ENCODE measurements at regions of chr10 and their contacts with region 1.

Region 1: DNA sequence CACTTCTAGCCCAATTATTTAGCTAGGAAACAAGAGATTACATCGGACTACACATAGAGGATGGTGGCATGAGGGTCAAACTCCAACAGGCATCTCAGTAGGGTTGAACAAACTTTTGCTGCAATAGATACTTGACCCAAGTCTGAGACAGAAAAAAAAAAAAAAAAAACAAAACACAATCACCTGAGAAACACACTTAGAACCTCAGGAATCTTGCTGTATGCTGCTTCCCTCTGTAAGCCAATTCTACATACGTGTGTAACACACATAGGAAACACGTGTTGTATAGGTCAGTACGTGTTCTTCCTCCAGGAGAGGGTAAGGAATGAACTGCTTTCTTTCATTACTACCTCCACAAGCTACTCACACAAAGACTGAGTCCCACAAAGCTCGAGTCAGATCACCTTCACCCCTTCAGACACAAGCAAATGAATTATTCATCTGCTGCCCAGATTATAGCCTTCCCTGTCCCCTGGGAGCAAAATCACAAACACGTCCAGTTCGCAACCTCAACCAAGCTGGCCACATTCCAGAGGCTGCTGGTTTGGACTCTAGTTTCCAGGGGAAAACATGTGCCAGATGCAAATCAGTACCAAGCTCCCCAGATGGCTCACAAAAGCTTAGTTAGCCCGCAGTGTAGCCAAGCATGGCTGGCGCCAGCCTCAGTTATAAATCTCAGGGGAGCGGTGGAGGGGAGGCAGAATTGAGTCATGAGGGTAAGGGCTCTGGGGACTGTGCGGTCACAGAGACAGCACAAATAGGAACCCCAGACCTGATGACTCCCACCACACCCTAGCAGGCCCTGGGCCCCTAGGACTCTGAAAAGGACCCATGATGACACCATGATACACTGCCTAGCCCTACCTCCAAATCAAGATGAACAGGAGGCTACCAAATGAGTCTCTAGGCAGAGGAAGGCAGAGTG is 15.1 kb downstream of the PSAP start:
- DNase-seq: peak; percentile 98
- H3K4me3 ChIP-seq: peak overlapping the region; percentile 57
- H3K27ac ChIP-seq: peak overlapping the region; percentile 87
- H3K4me1 ChIP-seq: peaks cover 80% of the 10 kb centered on the region
- CTCF ChIP-seq: peak; percentile 10; the same call in 1 of the 2 replicates

Region 2: GRCh38 chr10:71805776-71806703 is 29.9 kb before region 1 on chr10:
- CTCF ChIA-PET with region 1: no interaction called
- POLR2A ChIA-PET with region 1: no interaction called
- intact Hi-C with region 1: no loop called
- DNase-seq: no peak
- H3K4me3 ChIP-seq: no peak overlapping the region
- H3K27ac ChIP-seq: no peak overlapping the region
- H3K4me1 ChIP-seq: peaks cover 13% of the 10 kb centered on the region
- CTCF ChIP-seq: no peak

Region 3: DNA sequence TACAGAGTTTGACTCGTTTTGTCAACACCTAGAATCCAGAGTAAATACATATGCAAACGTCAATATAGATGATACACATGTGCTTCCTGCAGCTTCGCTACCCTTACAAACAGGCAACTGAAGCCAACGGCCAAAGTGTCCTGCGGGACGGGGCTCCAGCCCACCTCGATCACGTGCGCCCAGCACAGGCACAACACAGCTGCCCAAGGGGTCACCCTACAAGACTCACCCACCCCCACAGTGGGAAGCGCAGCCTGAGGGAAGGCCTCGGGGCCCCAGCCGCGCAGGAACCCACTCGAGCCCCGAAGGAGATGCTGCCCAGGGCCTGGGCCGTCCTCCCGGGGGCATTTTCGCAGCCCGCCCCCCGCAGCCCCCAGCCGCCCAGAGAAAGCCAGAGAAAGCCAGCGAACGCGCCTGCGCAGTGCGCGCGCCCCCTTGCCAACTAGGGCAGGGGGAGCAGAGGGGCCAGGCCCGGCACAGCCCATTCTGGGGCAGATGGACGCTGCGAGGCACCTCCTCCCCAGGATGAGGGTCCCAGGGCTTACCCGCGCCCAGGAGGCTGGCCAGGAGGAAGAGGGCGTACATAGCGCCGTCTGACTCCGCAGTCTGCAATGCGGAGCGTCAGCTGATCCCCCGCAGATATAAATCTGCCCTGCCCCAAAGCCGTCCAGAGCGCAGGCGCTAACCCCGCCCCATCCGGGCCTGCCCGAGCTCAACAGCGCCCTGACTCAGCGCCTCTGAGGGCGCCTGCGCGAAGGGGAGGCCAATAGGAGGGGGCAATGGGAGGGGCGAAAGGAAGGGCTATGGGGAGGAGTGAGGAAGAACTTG is 14.9 kb after region 1 on chr10 and contains the start of gene PSAP:
- CTCF ChIA-PET with region 1: interaction called, 9 read pairs
- POLR2A ChIA-PET with region 1: interaction called, 34 read pairs
- intact Hi-C with region 1: no loop called
- DNase-seq: peak; percentile 98
- H3K4me3 ChIP-seq: peak within 1 kb of the TSS; percentile 82
- H3K27ac ChIP-seq: peak within 1 kb of the TSS; percentile 55
- H3K4me1 ChIP-seq: peaks cover 55% of the 10 kb centered on the region
- CTCF ChIP-seq: 0 out of 2 replicates have a peak, but pooled peaks have one; percentile 35
- total RNA-seq, gene PSAP: 156 and 163 TPM in 2 replicates

Region 4: GRCh38 chr10:71860243-71861029 is 24.5 kb after region 1 on chr10:
- CTCF ChIA-PET with region 1: no interaction called
- POLR2A ChIA-PET with region 1: interaction called, 35 read pairs
- intact Hi-C with region 1: loop called (anchors 1 kb)
- DNase-seq: peak; percentile 65
- H3K4me3 ChIP-seq: peak overlapping the region; percentile 54
- H3K27ac ChIP-seq: peak overlapping the region; percentile 83
- H3K4me1 ChIP-seq: peaks cover 57% of the 10 kb centered on the region
- CTCF ChIP-seq: no peak

Region 5: DNA sequence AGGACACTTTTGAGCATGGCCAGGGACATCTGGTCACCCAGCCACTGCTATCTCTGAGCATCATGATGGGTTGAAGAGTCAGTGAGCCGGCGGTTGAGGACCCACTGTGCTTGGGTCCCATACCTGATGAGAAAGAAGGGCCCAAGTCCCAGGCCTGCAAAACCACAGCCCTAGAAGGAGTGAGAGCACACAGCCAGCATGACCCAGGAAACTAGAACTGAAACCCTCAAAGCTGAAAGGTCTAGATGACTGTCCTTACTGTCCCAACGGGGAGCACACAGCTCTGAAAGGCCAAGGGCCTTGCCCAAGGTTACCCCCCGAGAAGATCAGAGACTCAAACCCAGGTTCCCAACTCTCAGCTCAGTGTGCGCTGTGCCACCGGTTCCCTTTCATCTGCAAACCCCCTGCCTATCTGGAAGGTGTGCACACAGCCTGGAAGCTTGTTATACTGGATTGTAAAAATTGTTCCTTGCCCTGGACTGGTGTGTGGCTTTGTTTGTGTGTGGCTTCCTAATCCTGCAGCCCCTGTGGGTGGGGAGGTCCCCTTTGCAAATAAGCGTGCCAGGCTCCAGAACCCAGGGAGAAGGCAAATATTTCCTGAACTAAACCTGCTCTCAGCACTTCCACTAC is 37.8 kb after region 1 on chr10:
- CTCF ChIA-PET with region 1: interaction called, 3 read pairs
- POLR2A ChIA-PET with region 1: interaction called, 3 read pairs
- intact Hi-C with region 1: loop called (anchors 1 kb)
- DNase-seq: peak; percentile 46
- H3K4me3 ChIP-seq: no peak overlapping the region
- H3K27ac ChIP-seq: no peak overlapping the region
- H3K4me1 ChIP-seq: peaks cover 32% of the 10 kb centered on the region
- CTCF ChIP-seq: no peak

Region 6: GRCh38 chr10:71888623-71889387 is 52.9 kb after region 1 on chr10:
- CTCF ChIA-PET with region 1: no interaction called
- POLR2A ChIA-PET with region 1: interaction called, 5 read pairs
- intact Hi-C with region 1: loop called (anchors 1 kb)
- DNase-seq: peak; percentile 97
- H3K4me3 ChIP-seq: peak overlapping the region; percentile 57
- H3K27ac ChIP-seq: peak overlapping the region; percentile 50
- H3K4me1 ChIP-seq: peaks cover 38% of the 10 kb centered on the region
- CTCF ChIP-seq: peak; percentile 51

Region 7: GRCh38 chr10:71893920-71894319 is 58.0 kb after region 1 on chr10:
- CTCF ChIA-PET with region 1: interaction called, 14 read pairs
- POLR2A ChIA-PET with region 1: interaction called, 7 read pairs
- intact Hi-C with region 1: loop called (anchors 1 kb)
- DNase-seq: no peak
- H3K4me3 ChIP-seq: no peak overlapping the region
- H3K27ac ChIP-seq: no peak overlapping the region
- H3K4me1 ChIP-seq: peaks cover 18% of the 10 kb centered on the region
- CTCF ChIP-seq: no peak

Region 8: DNA sequence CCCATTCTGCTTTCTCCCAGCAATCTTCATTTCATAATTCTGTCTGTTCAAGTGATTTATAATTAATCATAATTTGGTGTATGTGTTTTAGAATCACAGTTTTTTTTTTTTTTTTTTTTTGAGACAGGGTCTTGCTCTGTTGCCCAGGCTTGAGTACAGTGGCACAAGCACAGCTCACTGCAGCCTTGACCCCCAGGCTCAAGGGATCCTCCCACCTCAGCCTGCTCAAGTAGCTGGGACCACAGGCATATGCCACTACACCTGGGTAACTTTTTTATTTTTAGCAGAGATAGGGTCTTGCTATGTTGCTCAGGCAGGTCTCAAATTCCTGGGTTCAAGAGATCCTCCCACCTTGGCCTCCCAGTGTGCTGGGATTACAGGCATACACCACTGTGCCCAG is 1167.9 kb after region 1 on chr10:
- CTCF ChIA-PET with region 1: no interaction called
- POLR2A ChIA-PET with region 1: no interaction called
- intact Hi-C with region 1: no loop called
- DNase-seq: no peak
- H3K4me3 ChIP-seq: no peak overlapping the region
- H3K27ac ChIP-seq: no peak overlapping the region
- H3K4me1 ChIP-seq: no peaks in the 10 kb centered on the region
- CTCF ChIP-seq: no peak